PC-3 (cell line): ENCODE measurements at regions of chr3 and their contacts with region 1.

Region 1: DNA sequence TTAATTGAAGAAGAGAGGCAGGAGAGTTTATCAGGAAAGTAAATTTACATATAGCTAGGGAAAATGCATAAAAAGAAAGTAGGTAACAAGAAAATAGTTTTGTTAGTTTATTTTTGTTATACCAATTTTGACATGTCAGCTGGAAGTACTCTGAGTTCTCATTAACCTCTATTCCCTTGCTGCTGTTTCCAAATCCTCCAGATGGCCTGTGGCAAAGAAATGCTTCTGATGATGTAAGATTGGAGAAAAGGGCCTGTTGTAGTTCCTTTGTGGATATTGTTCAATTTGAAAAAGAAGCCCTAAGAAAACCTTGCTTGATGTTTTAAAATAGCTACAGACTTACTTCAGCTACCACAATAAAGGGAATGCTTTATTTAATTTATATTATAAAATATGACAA is 192.9 kb upstream of the SLITRK3 start:
- DNase-seq: no peak
- ATAC-seq: no peak
- H3K4me3 ChIP-seq: no peak overlapping the region
- H3K27ac ChIP-seq: no peak overlapping the region
- H3K4me1 ChIP-seq: no peaks in the 10 kb centered on the region
- H3K27me3 ChIP-seq: no peaks in the 10 kb centered on the region
- CTCF ChIP-seq: no peak

Region 2: DNA sequence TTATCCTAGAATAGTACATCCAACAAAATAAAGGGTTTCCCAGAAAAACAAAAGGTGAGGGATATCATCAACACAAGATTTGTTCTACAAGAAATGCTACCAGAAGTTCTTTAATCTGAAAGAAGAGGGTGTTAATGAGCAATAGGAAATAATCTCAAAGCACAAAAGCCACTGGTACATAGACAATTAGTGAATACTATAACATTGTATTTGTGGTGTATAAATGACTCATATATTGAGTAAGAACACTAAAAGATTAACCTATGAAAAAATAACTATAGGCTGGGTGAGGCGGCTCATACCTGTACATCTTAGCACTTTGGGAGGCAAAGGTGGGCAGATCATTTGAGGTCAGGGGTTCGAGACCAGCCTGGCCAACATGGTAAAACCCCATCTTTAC is 17.4 kb after region 1 on chr3:
- CTCF ChIA-PET with region 1: no interaction called
- POLR2A ChIA-PET with region 1: no interaction called
- intact Hi-C with region 1: no loop called
- DNase-seq: no peak
- ATAC-seq: 0 out of 2 replicates have a peak, but pooled peaks have one; percentile 33
- H3K4me3 ChIP-seq: no peak overlapping the region
- H3K27ac ChIP-seq: no peak overlapping the region
- H3K4me1 ChIP-seq: no peaks in the 10 kb centered on the region
- H3K27me3 ChIP-seq: no peaks in the 10 kb centered on the region
- CTCF ChIP-seq: no peak

Region 3: GRCh38 chr3:165754219-165755007 is 365.3 kb after region 1 on chr3:
- CTCF ChIA-PET with region 1: no interaction called
- POLR2A ChIA-PET with region 1: interaction called, 22 read pairs
- intact Hi-C with region 1: no loop called
- DNase-seq: peak; percentile 61
- ATAC-seq: peak; percentile 79
- H3K4me3 ChIP-seq: no peak overlapping the region
- H3K27ac ChIP-seq: peak overlapping the region; percentile 75
- H3K4me1 ChIP-seq: peaks cover 30% of the 10 kb centered on the region
- H3K27me3 ChIP-seq: no peaks in the 10 kb centered on the region
- CTCF ChIP-seq: no peak